ENCODE measurements at regions of chr18 and their contacts with region 1.

Region 1: GRCh38 chr18:36572135-36572856 is 256.5 kb downstream of the TPGS2 start:
- DNase-seq: peak in 3 of 4 experiments; percentile 22 to 57 (median 49)
- ATAC-seq: peak; percentile 92
- H3K4me3 ChIP-seq: no peak overlapping the region
- H3K27ac ChIP-seq: no peak overlapping the region
- H3K4me1 ChIP-seq: no peaks in the 10 kb centered on the region
- H3K27me3 ChIP-seq: no peaks in the 10 kb centered on the region
- CTCF ChIP-seq: peak; percentile 57 to 69 (median 65)
- EP300 ChIP-seq: no peak
- POLR2A ChIP-seq: no peak
- RAD21 ChIP-seq: peak; percentile 69 to 72

Region 2: DNA sequence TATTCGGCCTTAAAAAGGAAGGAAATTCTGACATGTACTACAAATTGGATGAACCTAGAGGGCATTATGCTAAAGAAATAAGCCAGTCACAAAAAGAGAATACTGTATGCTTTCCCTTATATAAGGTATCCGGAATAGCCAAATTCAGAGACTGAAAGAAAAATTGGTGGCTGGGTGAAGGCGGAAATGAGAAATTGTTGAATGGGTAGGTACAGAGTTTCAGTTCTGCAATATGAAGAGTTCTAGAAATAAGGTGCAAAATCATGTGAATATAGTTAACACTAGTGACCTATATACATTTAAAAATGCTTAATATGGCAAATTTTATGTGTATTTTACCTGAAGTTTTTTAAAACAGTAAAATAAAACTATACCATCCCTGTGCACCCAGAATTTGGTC is 556.7 kb before region 1 on chr18:
- CTCF ChIA-PET with region 1: interaction called, 3 read pairs
- POLR2A ChIA-PET with region 1: no interaction called
- in situ Hi-C with region 1: no loop called
- intact Hi-C with region 1: loop called (anchors 5 kb)
- DNase-seq: no peak
- ATAC-seq: no peak
- H3K4me3 ChIP-seq: no peak overlapping the region
- H3K27ac ChIP-seq: no peak overlapping the region
- H3K4me1 ChIP-seq: no peaks in the 10 kb centered on the region
- H3K27me3 ChIP-seq: no peaks in the 10 kb centered on the region
- CTCF ChIP-seq: no peak
- EP300 ChIP-seq: no peak
- POLR2A ChIP-seq: no peak
- RAD21 ChIP-seq: no peak

Region 3: GRCh38 chr18:36083729-36084128 is 488.6 kb before region 1 on chr18:
- CTCF ChIA-PET with region 1: no interaction called
- POLR2A ChIA-PET with region 1: no interaction called
- in situ Hi-C with region 1: loop called (anchors 10 kb)
- intact Hi-C with region 1: no loop called
- DNase-seq: no peak
- ATAC-seq: no peak
- H3K4me3 ChIP-seq: no peak overlapping the region
- H3K27ac ChIP-seq: no peak overlapping the region
- H3K4me1 ChIP-seq: peaks cover 0 to 8% of the 10 kb centered on the region in 2 experiments; a peak in 1 of 5 replicates
- H3K27me3 ChIP-seq: peaks cover 5 to 22% of the 10 kb centered on the region in 2 experiments; a peak in 4 of 5 replicates
- CTCF ChIP-seq: no peak
- EP300 ChIP-seq: no peak
- POLR2A ChIP-seq: no peak
- RAD21 ChIP-seq: no peak

Region 4: GRCh38 chr18:36095936-36096519 is 476.3 kb before region 1 on chr18:
- CTCF ChIA-PET with region 1: interaction called, 9 read pairs
- POLR2A ChIA-PET with region 1: no interaction called
- in situ Hi-C with region 1: no loop called
- intact Hi-C with region 1: loop called (anchors 1 kb)
- DNase-seq: peak; percentile 41 to 74 (median 52)
- ATAC-seq: peak; percentile 67
- H3K4me3 ChIP-seq: no peak overlapping the region
- H3K27ac ChIP-seq: no peak overlapping the region
- H3K4me1 ChIP-seq: no peaks in the 10 kb centered on the region; a peak in 1 of 5 replicates
- H3K27me3 ChIP-seq: peaks cover 5 to 8% of the 10 kb centered on the region in 2 experiments; a peak in 3 of 5 replicates
- CTCF ChIP-seq: peak; percentile 38 to 88 (median 57); a peak in 3 of 6 replicates
- EP300 ChIP-seq: no peak
- POLR2A ChIP-seq: no peak
- RAD21 ChIP-seq: peak; percentile 89 to 95

Region 5: GRCh38 chr18:36296650-36297416 is 275.5 kb before region 1 on chr18:
- CTCF ChIA-PET with region 1: no interaction called
- POLR2A ChIA-PET with region 1: no interaction called
- in situ Hi-C with region 1: no loop called
- intact Hi-C with region 1: loop called (anchors 5 kb)
- DNase-seq: peak; percentile 60 to 67 (median 66)
- ATAC-seq: peak; percentile 84
- H3K4me3 ChIP-seq: peak overlapping the region; percentile 14; the same call in 1 of the 2 replicates
- H3K27ac ChIP-seq: no peak overlapping the region
- H3K4me1 ChIP-seq: peaks cover 0 to 20% of the 10 kb centered on the region in 2 experiments; a peak in 4 of 5 replicates
- H3K27me3 ChIP-seq: peaks cover 33 to 35% of the 10 kb centered on the region in 2 experiments
- CTCF ChIP-seq: peak; percentile 58 to 60 (median 59)
- EP300 ChIP-seq: no peak
- POLR2A ChIP-seq: no peak
- RAD21 ChIP-seq: peak in 1 of 2 experiments; percentile 56; a peak in 2 of 4 replicates

Region 6: DNA sequence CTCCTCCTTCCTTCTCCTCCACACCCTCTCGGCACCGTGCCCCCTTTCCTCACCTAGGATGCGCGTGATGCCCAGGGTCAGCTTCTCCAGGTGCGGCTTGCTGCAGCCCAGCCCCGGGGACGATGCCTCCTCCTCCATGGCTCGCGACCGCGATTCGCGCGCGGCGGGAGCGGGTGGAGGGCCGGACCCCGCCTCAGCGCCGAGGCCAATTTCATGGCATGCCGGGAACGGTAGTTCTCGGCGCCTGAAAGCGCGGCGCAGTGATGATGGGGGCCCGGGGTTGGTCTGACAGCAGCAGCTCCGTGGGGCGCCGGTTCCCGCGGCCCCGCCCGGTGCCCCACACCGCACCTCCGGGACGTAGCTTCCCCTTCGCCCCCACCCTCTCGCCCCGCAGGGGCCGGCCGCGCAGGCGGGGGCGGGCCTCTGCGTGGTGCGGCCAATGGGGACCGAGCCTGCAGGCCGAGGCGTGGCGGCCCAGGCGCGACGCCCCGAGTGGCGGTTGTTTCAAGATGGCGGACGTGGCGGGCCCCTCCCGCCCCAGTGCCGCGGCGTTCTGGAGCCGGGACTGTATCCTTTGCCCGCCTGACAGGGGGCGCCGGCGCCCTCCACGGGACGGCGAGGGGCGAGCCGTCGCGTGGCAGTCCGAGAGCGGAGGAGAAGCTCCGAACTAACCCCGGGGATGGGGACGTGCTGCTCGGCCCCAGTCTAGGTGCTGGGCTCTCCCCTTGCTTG is 256.5 kb after region 1 on chr18 and contains the starts of genes KIAA1328 and TPGS2:
- CTCF ChIA-PET with region 1: no interaction called
- POLR2A ChIA-PET with region 1: no interaction called
- in situ Hi-C with region 1: no loop called
- intact Hi-C with region 1: no loop called
- DNase-seq: peak; percentile 94 to 96 (median 96)
- ATAC-seq: peak; percentile 94
- H3K4me3 ChIP-seq: peak within 1 kb of the TSS; percentile 95
- H3K27ac ChIP-seq: peak within 1 kb of the TSS; percentile 87
- H3K4me1 ChIP-seq: peaks cover 3 to 24% of the 10 kb centered on the region in 2 experiments; a peak in 3 of 5 replicates
- H3K27me3 ChIP-seq: no peaks in the 10 kb centered on the region; a peak in 1 of 5 replicates
- CTCF ChIP-seq: peak; percentile 68 to 85 (median 85)
- EP300 ChIP-seq: no peak; the same call in 1 of the 2 replicates
- POLR2A ChIP-seq: peak; percentile 80
- RAD21 ChIP-seq: peak; percentile 62 to 74
- polyA plus RNA-seq, gene KIAA1328: 4.8 to 5.1 TPM
- polyA plus RNA-seq, gene TPGS2: 94.2 to 113 TPM

Region 7: DNA sequence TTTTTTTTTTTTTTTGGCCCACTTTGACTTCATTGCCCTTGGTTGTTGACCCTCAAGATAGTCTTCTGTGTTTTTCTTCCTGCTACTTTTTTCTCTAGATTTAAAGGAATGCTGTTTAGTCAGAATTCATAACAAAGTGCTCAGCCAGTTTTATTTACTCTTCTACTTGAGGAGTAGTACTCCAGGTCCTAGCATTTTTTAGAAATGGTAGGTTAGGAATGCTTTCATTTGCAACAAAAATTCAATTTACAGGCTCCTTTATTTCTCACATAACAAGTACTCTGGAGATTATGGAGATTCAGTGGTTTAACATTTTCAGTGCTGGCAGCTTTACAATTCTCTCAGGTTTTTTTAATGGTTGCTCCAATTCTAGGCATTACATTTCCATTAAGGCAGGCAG is 314.8 kb after region 1 on chr18:
- CTCF ChIA-PET with region 1: no interaction called
- POLR2A ChIA-PET with region 1: no interaction called
- in situ Hi-C with region 1: no loop called
- intact Hi-C with region 1: no loop called
- DNase-seq: no peak
- ATAC-seq: no peak
- H3K4me3 ChIP-seq: no peak overlapping the region
- H3K27ac ChIP-seq: no peak overlapping the region
- H3K4me1 ChIP-seq: no peaks in the 10 kb centered on the region; a peak in 2 of 5 replicates
- H3K27me3 ChIP-seq: no peaks in the 10 kb centered on the region
- CTCF ChIP-seq: no peak
- EP300 ChIP-seq: no peak
- POLR2A ChIP-seq: no peak
- RAD21 ChIP-seq: no peak

Measured in K562 (cell line).